ENCODE measurements at regions of chr4 and their contacts with region 1.

Region 1: GRCh38 chr4:128809477-128810330 is at the start of gene JADE1:
- DNase-seq: peak; percentile 93 to 95
- H3K4me3 ChIP-seq: peak within 1 kb of the TSS; percentile 67
- H3K4me3 Mint-ChIP-seq: peak within 1 kb of the TSS; percentile 93
- H3K27ac Mint-ChIP-seq: peak within 1 kb of the TSS; percentile 97
- H3K4me1 ChIP-seq: peaks cover 26% of the 10 kb centered on the region
- H3K4me1 Mint-ChIP-seq: peaks cover 8% of the 10 kb centered on the region
- H3K27me3 ChIP-seq: no peaks in the 10 kb centered on the region
- H3K27me3 Mint-ChIP-seq: no peaks in the 10 kb centered on the region
- CTCF ChIP-seq: peak; percentile 57 to 78
- total RNA-seq, gene JADE1: 30.2 and 32.5 TPM in 2 replicates

Region 2: GRCh38 chr4:128249787-128250668 is 559.7 kb before region 1 on chr4:
- CTCF ChIA-PET with region 1: no interaction called
- POLR2A ChIA-PET with region 1: no interaction called
- intact Hi-C with region 1: no loop called
- DNase-seq: no peak
- H3K4me3 ChIP-seq: no peak overlapping the region
- H3K4me3 Mint-ChIP-seq: no peak overlapping the region
- H3K27ac Mint-ChIP-seq: no peak overlapping the region
- H3K4me1 ChIP-seq: no peaks in the 10 kb centered on the region
- H3K4me1 Mint-ChIP-seq: no peaks in the 10 kb centered on the region
- H3K27me3 ChIP-seq: no peaks in the 10 kb centered on the region
- H3K27me3 Mint-ChIP-seq: no peaks in the 10 kb centered on the region
- CTCF ChIP-seq: no peak

Region 3: GRCh38 chr4:128454281-128455075 is 355.2 kb before region 1 on chr4:
- CTCF ChIA-PET with region 1: interaction called, 4 read pairs
- POLR2A ChIA-PET with region 1: interaction called, 5 read pairs
- intact Hi-C with region 1: loop called (anchors 1 kb)
- DNase-seq: peak; percentile 78 to 82
- H3K4me3 ChIP-seq: no peak overlapping the region
- H3K4me3 Mint-ChIP-seq: no peak overlapping the region
- H3K27ac Mint-ChIP-seq: no peak overlapping the region
- H3K4me1 ChIP-seq: no peaks in the 10 kb centered on the region
- H3K4me1 Mint-ChIP-seq: peaks cover 7% of the 10 kb centered on the region
- H3K27me3 ChIP-seq: no peaks in the 10 kb centered on the region
- H3K27me3 Mint-ChIP-seq: no peaks in the 10 kb centered on the region
- CTCF ChIP-seq: peak; percentile 72 to 77

Region 4: DNA sequence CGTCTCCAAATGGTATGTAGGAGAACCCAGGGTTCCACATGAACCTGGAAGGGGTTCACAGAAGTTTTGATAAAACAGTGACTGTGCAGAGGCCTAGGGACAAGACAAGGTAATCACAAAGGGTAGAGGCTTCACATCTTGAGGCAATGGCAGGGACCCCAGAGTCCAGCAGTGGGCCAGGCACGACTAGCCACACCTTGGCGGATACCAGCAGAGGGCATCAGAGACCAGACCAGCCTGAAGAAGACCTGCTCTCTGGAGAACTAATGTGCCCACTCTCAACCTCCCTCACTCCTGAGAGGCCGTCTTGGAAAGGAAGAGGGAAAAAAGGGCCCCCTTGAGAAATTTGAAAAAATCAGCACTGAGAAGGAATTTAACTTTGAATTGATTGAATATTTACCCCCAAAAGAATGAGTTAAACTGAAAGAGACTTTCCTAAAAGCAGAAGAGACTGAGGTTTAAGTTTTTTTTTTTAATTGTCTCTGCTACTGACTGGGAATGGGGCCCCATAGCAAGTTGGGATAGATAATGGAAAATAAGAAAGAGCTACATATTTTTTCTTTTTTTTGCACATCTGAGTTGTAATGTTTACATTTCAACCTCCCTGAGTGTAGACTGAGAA is 244.0 kb before region 1 on chr4:
- CTCF ChIA-PET with region 1: no interaction called
- POLR2A ChIA-PET with region 1: interaction called, 13 read pairs
- intact Hi-C with region 1: no loop called
- DNase-seq: peak; percentile 62 to 70
- H3K4me3 ChIP-seq: no peak overlapping the region
- H3K4me3 Mint-ChIP-seq: no peak overlapping the region
- H3K27ac Mint-ChIP-seq: no peak overlapping the region
- H3K4me1 ChIP-seq: peaks cover 28% of the 10 kb centered on the region
- H3K4me1 Mint-ChIP-seq: peaks cover 43% of the 10 kb centered on the region
- H3K27me3 ChIP-seq: no peaks in the 10 kb centered on the region
- H3K27me3 Mint-ChIP-seq: no peaks in the 10 kb centered on the region
- CTCF ChIP-seq: peak; percentile 40 to 69

Region 5: DNA sequence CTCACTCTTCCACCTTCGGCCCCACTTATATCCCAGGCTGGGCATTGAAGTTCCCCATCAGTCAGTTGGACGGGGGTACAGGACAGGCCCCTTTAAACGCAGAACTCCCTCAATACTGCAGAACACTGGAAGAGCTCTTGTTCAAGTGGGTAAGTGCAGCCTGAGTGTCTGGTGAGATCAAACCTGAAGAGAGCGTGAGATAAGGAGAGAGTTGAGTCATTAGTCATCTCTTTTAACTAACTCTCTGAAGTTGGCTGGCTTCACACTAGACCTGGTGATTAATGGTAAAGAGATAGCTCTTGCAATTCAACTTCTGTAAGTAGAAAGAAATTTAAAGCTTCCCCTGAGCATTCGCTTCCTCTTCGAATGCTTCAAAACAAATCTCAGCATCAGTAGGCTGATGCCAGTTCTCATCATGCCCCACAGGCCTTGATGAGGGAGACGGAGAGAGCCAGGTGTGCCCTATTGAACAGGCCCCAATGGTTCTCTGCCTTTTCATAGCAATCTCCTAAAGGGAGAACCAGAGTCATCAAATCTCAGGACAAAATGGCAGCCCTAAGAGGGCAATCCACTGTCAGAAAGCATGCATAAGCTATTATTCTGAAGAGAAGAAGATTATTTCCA is 41.2 kb before region 1 on chr4:
- CTCF ChIA-PET with region 1: no interaction called
- POLR2A ChIA-PET with region 1: no interaction called
- intact Hi-C with region 1: no loop called
- DNase-seq: no peak
- H3K4me3 ChIP-seq: no peak overlapping the region
- H3K4me3 Mint-ChIP-seq: no peak overlapping the region
- H3K27ac Mint-ChIP-seq: peak overlapping the region; percentile 3
- H3K4me1 ChIP-seq: peaks cover 23% of the 10 kb centered on the region
- H3K4me1 Mint-ChIP-seq: peaks cover 19% of the 10 kb centered on the region
- H3K27me3 ChIP-seq: no peaks in the 10 kb centered on the region
- H3K27me3 Mint-ChIP-seq: no peaks in the 10 kb centered on the region
- CTCF ChIP-seq: no peak

Region 6: DNA sequence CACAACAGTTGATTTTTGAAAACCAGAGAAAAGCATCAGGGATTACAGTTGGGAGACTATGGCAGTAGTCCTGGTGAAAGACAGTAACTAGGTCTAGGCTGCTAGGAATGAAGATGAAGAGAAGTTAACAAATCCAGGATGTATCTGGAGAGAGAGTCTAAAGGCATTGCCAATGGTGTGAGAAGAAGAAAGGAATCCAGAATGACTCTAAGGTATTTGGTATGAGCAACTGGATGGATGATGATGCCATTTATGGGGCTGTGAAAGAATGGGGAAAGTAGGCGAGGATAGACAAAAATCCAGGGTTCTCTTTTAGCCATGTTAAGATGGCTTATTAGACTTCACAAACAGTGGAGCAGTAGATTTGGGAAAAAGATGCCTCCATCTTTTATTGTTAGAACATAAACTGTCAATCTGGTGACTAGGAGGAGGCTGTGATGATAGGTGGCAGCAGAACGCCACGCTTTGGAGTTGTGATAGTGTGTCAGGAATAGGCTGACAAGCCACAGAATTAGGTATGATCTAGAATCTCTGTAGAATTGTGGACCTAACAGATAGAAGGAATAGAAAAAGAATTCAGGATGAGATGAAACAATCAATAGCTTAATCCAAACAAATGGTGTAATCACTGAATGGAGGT is 27.5 kb before region 1 on chr4:
- CTCF ChIA-PET with region 1: interaction called, 4 read pairs
- POLR2A ChIA-PET with region 1: no interaction called
- intact Hi-C with region 1: loop called (anchors 1 kb)
- DNase-seq: peak; percentile 58 to 62
- H3K4me3 ChIP-seq: no peak overlapping the region
- H3K4me3 Mint-ChIP-seq: no peak overlapping the region
- H3K27ac Mint-ChIP-seq: no peak overlapping the region
- H3K4me1 ChIP-seq: peaks cover 3% of the 10 kb centered on the region
- H3K4me1 Mint-ChIP-seq: peaks cover 3% of the 10 kb centered on the region
- H3K27me3 ChIP-seq: no peaks in the 10 kb centered on the region
- H3K27me3 Mint-ChIP-seq: no peaks in the 10 kb centered on the region
- CTCF ChIP-seq: peak; percentile 41 to 45

Region 7: GRCh38 chr4:128831531-128832242 is 22.0 kb after region 1 on chr4:
- CTCF ChIA-PET with region 1: no interaction called
- POLR2A ChIA-PET with region 1: no interaction called
- intact Hi-C with region 1: loop called (anchors 1 kb)
- DNase-seq: peak; percentile 21 to 40
- H3K4me3 ChIP-seq: no peak overlapping the region; the same call in 1 of the 2 replicates
- H3K4me3 Mint-ChIP-seq: peak overlapping the region; percentile 48
- H3K27ac Mint-ChIP-seq: peak overlapping the region; percentile 38
- H3K4me1 ChIP-seq: peaks cover 22% of the 10 kb centered on the region
- H3K4me1 Mint-ChIP-seq: peaks cover 29% of the 10 kb centered on the region
- H3K27me3 ChIP-seq: no peaks in the 10 kb centered on the region
- H3K27me3 Mint-ChIP-seq: no peaks in the 10 kb centered on the region
- CTCF ChIP-seq: no peak